Naive thymus-derived CD4-positive, alpha-beta T cell (primary cell): ENCODE measurements at regions of chrX and their contacts with region 1.

Region 1: DNA sequence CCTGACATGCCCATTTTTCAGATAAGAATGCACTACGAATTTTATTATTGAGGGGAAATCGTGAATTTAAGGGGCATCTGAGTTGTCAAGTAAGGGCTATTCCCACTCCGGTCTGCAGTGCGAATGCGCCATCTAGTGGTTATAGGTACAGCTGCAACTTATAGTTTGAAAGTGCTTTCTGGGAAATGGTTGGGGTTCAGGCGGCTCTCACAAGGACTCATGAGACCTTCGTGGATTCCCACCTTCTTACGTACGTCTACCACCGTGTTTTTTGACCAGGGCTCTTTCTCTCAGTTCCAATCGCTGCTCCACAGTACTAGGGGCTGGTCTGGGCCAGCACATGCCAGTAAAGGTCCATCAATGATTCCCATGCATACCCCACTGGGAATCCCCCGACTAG is 12.3 kb downstream of the MSL3 start:
- DNase-seq: peak in 7 of 9 donors; percentile 56 to 75 (median 69)
- ATAC-seq: peak; percentile 84
- H3K4me3 ChIP-seq: no peak overlapping the region
- H3K4me3 Mint-ChIP-seq: peak overlapping the region in 2 of 10 donors; percentile 14 to 25
- H3K27ac ChIP-seq: peak overlapping the region; percentile 62
- H3K27ac Mint-ChIP-seq: peak overlapping the region; percentile 69 to 96 (median 86)
- H3K4me1 ChIP-seq: peaks cover 8 to 20% of the 10 kb centered on the region in 2 donors
- H3K4me1 Mint-ChIP-seq: peaks cover 7 to 53% (median 39%) of the 10 kb centered on the region in 7 donors
- H3K27me3 ChIP-seq: no peaks in the 10 kb centered on the region
- H3K27me3 Mint-ChIP-seq: no peaks in the 10 kb centered on the region

Region 2: DNA sequence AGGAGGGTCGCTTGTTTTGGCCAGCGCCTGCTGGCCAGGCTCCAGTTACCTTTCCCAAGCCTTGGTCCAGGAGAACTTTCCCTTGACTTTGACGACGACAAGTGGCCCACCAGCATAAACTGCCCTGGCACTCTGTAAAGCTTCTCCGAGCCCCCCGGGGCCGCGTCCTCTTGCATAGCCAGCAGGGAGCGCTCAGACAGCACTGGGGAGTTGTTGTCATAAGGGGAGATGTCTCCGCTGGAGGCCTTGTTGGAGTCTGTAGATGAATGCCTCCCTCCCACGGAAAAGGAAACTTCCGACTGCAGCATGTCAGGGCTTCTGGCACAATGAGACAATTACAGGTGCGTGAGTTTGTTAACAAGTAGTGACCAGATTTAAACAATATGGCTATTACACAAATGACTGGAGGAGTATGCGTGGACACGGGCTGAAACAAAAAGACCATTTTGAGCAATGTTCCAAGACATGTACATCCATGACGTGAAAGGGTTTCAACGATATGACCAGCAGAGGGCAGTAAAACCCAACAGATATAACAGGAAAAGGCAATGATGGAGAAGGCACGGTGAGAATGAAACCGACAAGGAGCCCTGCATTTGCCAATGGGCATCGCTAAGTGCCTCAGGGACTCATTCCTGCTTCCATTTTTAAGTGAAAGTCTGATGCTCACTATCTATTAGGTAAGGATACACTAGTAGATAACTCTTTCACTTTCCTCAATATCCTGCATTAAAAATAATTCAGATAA is 626.2 kb before region 1 on chrX:
- CTCF ChIA-PET with region 1: no interaction called
- POLR2A ChIA-PET with region 1: no interaction called
- intact Hi-C with region 1: loop called in 1 of 2 experiments (anchors 10 kb)
- DNase-seq: peak in 8 of 9 donors; percentile 20 to 62 (median 52)
- ATAC-seq: peak; percentile 79
- H3K4me3 ChIP-seq: no peak overlapping the region
- H3K4me3 Mint-ChIP-seq: peak overlapping the region in 6 of 10 donors; percentile 10 to 59 (median 34)
- H3K27ac ChIP-seq: no peak overlapping the region
- H3K27ac Mint-ChIP-seq: no peak overlapping the region
- H3K4me1 ChIP-seq: no peaks in the 10 kb centered on the region
- H3K4me1 Mint-ChIP-seq: peaks cover 0 to 4% (median 3%) of the 10 kb centered on the region in 7 donors
- H3K27me3 ChIP-seq: no peaks in the 10 kb centered on the region
- H3K27me3 Mint-ChIP-seq: peaks cover 0 to 5% (median 0%) of the 10 kb centered on the region in 5 donors

Region 3: GRCh38 chrX:11678158-11678557 is 92.2 kb before region 1 on chrX:
- CTCF ChIA-PET with region 1: interaction called, 3 read pairs
- POLR2A ChIA-PET with region 1: no interaction called
- intact Hi-C with region 1: loop called in 1 of 2 experiments (anchors 10 kb)
- DNase-seq: no peak
- ATAC-seq: no peak
- H3K4me3 ChIP-seq: no peak overlapping the region
- H3K4me3 Mint-ChIP-seq: no peak overlapping the region
- H3K27ac ChIP-seq: no peak overlapping the region
- H3K27ac Mint-ChIP-seq: no peak overlapping the region
- H3K4me1 ChIP-seq: no peaks in the 10 kb centered on the region
- H3K4me1 Mint-ChIP-seq: no peaks in the 10 kb centered on the region
- H3K27me3 ChIP-seq: no peaks in the 10 kb centered on the region
- H3K27me3 Mint-ChIP-seq: peaks cover 3 to 16% (median 5%) of the 10 kb centered on the region in 5 donors

Region 4: DNA sequence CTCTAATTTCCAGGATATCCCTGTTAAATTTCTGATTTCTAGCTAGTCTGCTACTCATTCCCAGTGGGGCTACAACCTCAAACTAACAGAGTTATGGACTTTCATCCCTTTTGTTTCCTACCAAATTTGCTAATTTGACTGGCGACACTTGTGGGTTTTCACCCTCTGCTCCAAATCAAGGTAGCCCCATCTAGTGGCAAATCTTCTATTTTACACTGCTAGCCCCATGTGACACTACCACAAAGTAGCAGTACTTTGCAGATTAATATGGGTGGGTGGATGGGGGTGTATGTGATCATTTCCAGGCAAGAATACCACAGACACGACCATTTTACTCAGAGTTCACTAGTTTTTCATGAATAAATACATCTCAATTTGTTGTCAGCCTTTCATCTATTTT is 138.1 kb after region 1 on chrX:
- CTCF ChIA-PET with region 1: interaction called, 3 read pairs
- POLR2A ChIA-PET with region 1: no interaction called
- intact Hi-C with region 1: loop called (anchors 5 kb)
- DNase-seq: peak in 7 of 9 donors; percentile 15 to 45 (median 31)
- ATAC-seq: peak; percentile 65
- H3K4me3 ChIP-seq: no peak overlapping the region
- H3K4me3 Mint-ChIP-seq: no peak overlapping the region
- H3K27ac ChIP-seq: no peak overlapping the region
- H3K27ac Mint-ChIP-seq: no peak overlapping the region
- H3K4me1 ChIP-seq: no peaks in the 10 kb centered on the region
- H3K4me1 Mint-ChIP-seq: peaks cover 0 to 12% (median 7%) of the 10 kb centered on the region in 7 donors
- H3K27me3 ChIP-seq: no peaks in the 10 kb centered on the region
- H3K27me3 Mint-ChIP-seq: no peaks in the 10 kb centered on the region